ENCODE measurements at regions of chr9 and their contacts with region 1.

Region 1: DNA sequence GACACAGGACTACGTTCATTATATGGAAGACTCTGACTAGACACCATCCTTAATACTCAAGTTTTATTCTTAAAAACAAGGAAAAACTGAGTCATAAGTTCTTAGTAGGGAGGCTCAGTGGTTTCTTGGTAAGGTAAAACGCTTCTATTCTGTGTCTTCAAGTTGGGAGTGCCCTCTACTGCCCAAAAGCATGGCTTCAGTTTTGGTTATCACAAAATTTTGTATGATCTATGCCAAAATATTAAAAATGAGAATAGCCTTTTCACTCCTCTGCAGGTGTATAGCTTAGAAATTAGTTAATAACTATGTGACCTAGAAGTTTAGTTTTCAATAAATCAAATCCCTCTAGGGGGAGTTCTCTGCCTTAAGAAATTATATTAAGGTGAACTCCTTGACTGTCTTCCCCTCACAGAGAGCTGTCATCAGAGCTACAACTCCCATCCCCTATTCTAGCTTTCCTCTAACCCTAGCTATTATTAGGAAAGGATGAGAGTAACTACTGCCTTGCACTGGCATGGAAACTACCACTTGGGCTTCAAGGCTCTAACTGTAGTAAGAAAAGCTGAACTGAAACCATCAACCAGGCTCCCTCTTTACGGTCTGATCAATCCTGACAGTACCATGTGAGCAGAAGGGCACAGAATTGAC is 189.7 kb downstream of the GNAQ start:
- DNase-seq: no peak

Region 2: GRCh38 chr9:77977210-77977611 is 135.3 kb after region 1 on chr9:
- intact Hi-C with region 1: loop called (anchors 10 kb)
- DNase-seq: peak in 9 of 10 donors; percentile 27 to 93 (median 61)